ENCODE measurements at regions of chr15 and their contacts with region 1.

Region 1: DNA sequence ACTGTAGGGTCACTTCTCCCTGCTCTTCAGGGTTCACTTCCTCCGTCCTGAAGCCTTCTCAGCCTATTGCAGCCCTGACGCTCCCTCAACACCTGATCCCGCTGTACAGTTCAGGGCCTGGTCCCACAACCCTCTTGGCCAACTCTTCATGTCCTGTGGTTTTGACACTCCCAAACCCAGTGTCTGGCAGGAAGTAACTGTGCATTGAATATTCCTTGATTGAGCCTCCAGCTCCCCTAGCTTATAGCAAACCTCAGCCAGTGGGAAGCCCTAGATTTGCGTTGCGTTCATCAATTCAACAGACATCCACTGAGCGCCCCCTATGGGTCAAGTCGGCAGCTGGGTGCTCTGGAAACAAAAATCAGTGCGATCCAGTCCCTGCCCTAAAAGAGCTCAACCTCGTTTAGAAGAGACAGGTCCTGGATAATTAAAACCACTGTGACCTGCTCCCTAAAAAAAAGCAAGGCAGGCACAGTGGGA is 13.5 kb downstream of the UBAP1L start:
- DNase-seq: peak; percentile 80
- H3K4me3 Mint-ChIP-seq: no peak overlapping the region
- H3K27ac Mint-ChIP-seq: no peak overlapping the region
- H3K4me1 Mint-ChIP-seq: no peaks in the 10 kb centered on the region
- H3K27me3 Mint-ChIP-seq: no peaks in the 10 kb centered on the region
- CTCF ChIP-seq: peak; percentile 88

Region 2: GRCh38 chr15:65086017-65086679 is 15.3 kb before region 1 on chr15:
- CTCF ChIA-PET with region 1: interaction called, 10 read pairs
- intact Hi-C with region 1: no loop called
- DNase-seq: peak; percentile 74
- H3K4me3 Mint-ChIP-seq: no peak overlapping the region
- H3K27ac Mint-ChIP-seq: no peak overlapping the region
- H3K4me1 Mint-ChIP-seq: peaks cover 21% of the 10 kb centered on the region
- H3K27me3 Mint-ChIP-seq: peaks cover 43% of the 10 kb centered on the region
- CTCF ChIP-seq: peak; percentile 33

Measured in Calu3 (cell line).